ENCODE measurements at regions of chr6 and their contacts with region 1.

Region 1: DNA sequence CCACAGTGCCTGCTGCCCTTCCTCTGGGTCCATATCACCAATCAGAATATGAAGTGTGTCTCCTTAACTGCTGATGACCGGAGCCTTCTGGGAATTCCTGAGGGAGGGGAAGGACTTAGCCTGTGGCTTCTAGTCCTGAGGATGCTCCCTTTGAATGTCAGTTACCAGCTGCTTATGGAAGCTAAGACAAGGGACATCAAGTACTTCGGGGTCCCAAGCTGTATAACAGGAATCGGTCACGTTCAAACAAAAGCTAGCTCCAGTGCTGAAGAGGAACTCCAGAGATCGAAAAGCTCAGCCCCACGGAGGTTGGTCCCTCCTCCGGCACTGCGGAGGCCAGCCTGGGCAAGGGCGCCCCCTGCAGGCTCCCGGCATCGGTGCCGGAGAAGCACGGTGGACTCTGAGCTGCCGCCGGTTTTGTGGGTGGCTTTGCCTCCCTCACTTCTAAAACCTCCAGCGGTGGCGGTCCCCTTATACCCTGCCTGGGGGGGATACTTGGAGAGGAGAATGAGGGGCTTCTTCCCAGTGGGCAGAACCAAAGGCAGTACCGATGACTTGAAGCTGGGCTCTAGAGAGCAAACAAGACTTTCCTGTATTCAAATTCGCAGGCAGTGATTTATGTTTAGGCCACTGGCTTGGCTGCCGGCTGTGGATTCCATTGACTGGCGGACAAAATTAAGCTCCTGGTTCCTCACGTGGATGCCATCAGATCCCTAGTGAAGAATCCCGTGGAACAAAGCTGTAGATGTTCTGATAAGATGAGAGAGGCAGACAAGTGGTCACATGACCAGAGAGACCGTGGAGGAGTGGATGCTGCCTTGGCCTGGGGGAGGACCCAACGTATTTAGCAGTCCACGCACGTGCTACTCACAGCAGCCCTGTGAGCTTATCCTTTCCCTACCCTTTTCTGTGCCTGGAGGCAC is 16.2 kb upstream of the UBR2 start:
- DNase-seq: peak; percentile 88
- H3K4me3 ChIP-seq: peak overlapping the region; percentile 37
- H3K27ac ChIP-seq: peak overlapping the region; percentile 31
- H3K4me1 ChIP-seq: peaks cover 4% of the 10 kb centered on the region
- H3K27me3 ChIP-seq: no peaks in the 10 kb centered on the region
- CTCF ChIP-seq: peak; percentile 98

Region 2: GRCh38 chr6:42260972-42261371 is 286.7 kb before region 1 on chr6:
- intact Hi-C with region 1: loop called (anchors 5 kb)
- DNase-seq: no peak
- H3K4me3 ChIP-seq: no peak overlapping the region
- H3K27ac ChIP-seq: no peak overlapping the region
- H3K4me1 ChIP-seq: no peaks in the 10 kb centered on the region
- H3K27me3 ChIP-seq: no peaks in the 10 kb centered on the region
- CTCF ChIP-seq: peak; percentile 40